ENCODE measurements at regions of chr9 and their contacts with region 1.

Region 1: DNA sequence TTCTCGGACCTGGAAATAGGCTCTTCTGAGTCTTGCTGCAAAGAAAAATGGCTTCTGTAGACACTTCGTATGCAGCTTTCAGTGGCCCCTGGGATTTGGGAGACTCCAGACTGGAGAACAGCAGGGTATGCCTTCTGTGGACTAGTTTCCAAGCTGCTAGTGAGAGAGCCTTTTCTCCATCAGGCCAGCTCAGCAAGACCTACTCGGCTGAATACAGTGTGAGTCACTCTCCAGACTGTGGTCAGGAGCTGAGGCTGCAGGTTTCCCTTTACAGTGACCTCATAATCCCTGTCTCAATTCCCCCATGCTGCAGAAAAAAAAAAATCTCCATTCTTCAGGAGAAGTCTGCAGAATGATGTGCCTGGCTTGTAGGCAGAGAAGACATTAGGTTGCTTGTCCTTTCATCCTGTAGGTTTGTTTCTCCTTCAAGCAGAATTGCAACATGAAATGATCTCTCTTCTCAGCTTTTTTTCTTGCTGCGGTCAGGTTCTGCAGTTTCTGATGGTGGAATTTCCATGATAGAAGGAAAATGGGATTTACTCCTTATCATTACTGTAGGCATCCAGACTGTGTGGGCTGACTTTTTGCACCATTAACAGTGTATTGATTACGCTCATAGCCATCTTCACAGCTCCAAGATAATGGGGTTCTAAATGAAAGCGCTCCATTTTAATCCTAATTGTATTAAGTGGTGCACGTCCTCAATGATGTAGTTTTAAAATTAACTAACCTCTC is 78.3 kb upstream of the TNFSF8 start:
- DNase-seq: no peak
- H3K4me3 Mint-ChIP-seq: no peak overlapping the region
- H3K27ac Mint-ChIP-seq: no peak overlapping the region
- H3K4me1 Mint-ChIP-seq: peaks cover 61% of the 10 kb centered on the region
- H3K27me3 Mint-ChIP-seq: no peaks in the 10 kb centered on the region

Region 2: DNA sequence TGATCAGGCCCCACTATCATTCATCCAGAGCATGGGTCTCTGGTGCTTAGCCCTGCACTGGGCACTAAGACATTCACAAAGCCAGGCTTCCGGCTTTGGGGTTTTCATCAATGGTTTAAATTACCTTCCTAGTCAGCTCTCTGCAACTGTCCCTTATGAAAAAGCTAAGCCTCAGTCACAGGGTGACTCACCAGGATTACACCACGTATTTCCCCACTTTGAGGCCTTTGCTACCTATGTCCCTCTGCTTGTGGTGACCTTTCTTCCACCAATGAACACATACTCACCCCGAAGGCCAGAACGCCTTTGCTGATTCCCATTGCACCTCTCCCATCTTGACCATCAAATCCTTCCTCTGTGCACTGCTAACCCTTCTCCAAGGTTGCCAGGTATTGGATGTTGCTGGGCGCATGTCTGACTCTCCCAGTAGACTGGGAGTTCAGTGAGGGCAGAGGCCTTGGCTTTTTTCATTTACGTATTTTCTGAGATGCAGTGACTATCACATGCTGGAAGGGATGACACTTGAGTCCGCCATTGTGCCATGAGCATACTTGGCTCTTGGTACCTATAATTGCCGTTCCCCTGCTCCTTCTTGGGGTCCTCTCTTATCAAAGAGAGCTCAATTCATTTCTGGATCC is 19.6 kb before region 1 on chr9:
- CTCF ChIA-PET with region 1: interaction called, 12 read pairs
- DNase-seq: peak; percentile 26
- H3K4me3 Mint-ChIP-seq: peak overlapping the region; percentile 11
- H3K27ac Mint-ChIP-seq: peak overlapping the region; percentile 89
- H3K4me1 Mint-ChIP-seq: peaks cover 45% of the 10 kb centered on the region
- H3K27me3 Mint-ChIP-seq: peaks cover 2% of the 10 kb centered on the region

Measured in activated naive CD4-positive, alpha-beta T cell treated with anti-CD3 and anti-CD28 coated beads, Interleukin-2, amount 10 ng/mL, durations not matched to agents 7 days and 5 days (primary cell).